GM12878 (cell line): ENCODE measurements at regions of chr14 and their contacts with region 1.

Region 1: DNA sequence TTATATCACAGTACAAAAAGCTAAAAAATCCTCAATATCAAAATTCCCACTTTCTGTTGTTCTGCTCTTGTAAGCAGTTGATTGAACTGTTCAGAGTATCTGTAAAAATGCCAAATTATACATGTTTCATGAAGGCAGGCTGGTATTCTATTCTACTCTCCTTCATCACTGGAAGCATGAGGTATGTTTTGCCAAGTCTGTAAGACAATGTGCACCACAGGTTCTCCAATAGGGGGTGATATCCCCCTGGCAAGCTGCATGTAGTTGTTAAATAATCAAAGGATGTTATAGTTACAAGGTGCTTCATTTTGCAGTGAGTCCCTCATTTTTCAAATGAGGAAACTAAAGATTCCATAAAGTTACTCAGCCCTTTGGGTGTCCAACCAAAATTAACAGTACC is 15.1 kb upstream of the NEK9 start:
- DNase-seq: no peak
- ATAC-seq: peak; percentile 65
- H3K4me3 ChIP-seq: no peak overlapping the region
- H3K27ac ChIP-seq: no peak overlapping the region
- H3K4me1 ChIP-seq: peaks cover 18% of the 10 kb centered on the region
- H3K27me3 ChIP-seq: no peaks in the 10 kb centered on the region
- CTCF ChIP-seq: peak; percentile 44 to 47 (median 45); a peak in 5 of 6 replicates
- EP300 ChIP-seq: no peak
- POLR2A ChIP-seq: no peak
- RAD21 ChIP-seq: peak; percentile 63

Region 2: DNA sequence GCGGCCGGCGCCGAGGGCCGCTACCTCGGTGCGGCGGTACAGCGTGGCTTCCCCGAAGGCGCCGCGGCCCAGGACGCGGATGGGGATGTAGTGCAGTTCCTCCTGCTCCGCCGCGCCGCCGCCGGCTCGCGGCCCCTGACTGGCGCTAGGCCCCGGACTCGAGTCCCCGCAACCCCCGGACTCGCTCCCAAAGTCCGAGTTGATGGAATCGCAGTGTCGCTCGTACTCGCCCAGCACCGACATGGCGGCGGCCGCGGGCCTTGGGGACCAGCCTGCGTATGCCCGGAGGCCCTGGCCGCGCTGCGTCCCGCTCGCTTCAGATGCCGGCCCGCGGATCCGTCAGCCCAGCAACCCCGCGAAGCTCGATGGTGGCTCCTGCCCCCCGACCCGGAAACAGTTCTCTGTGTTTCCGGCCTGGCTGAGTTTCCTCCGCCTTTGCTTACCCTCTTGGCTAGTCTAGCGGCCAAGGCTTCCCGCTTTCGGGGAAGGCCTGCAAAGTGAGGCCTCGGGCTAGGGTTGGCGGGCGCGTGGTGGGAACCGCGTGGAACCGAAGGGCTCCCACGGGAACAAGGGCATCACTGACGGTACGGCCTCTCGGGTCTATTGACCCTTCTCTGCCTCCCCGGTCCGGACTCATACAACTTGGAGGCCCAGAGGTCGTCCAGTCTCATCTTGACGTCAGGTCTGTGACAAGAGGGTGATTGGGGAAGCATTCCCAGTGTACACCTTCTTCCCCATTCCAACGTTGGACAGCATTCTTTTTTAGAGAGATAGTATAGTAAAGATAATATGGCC is 15.1 kb before region 1 on chr14 and contains the start of gene NEK9:
- CTCF ChIA-PET with region 1: interaction called, 7 read pairs
- POLR2A ChIA-PET with region 1: interaction called, 3 read pairs
- RAD21 ChIA-PET with region 1: interaction called, 11 read pairs
- SMC1A ChIA-PET with region 1: interaction called, 11 read pairs
- in situ Hi-C with region 1: no loop called
- intact Hi-C with region 1: no loop called
- DNase-seq: peak; percentile 45
- ATAC-seq: peak; percentile 98
- H3K4me3 ChIP-seq: peak within 1 kb of the TSS; percentile 76
- H3K27ac ChIP-seq: peak within 1 kb of the TSS; percentile 88
- H3K4me1 ChIP-seq: peaks cover 11% of the 10 kb centered on the region
- H3K27me3 ChIP-seq: no peaks in the 10 kb centered on the region
- CTCF ChIP-seq: no peak
- EP300 ChIP-seq: no peak
- POLR2A ChIP-seq: peak; percentile 98
- RAD21 ChIP-seq: no peak
- polyA plus RNA-seq, gene NEK9: 6.0 to 15.7 TPM

Region 3: GRCh38 chr14:75230140-75231045 is 88.4 kb after region 1 on chr14:
- CTCF ChIA-PET with region 1: interaction called, 4 read pairs
- POLR2A ChIA-PET with region 1: no interaction called
- RAD21 ChIA-PET with region 1: no interaction called
- SMC1A ChIA-PET with region 1: no interaction called
- in situ Hi-C with region 1: no loop called
- intact Hi-C with region 1: loop called (anchors 5 kb)
- DNase-seq: peak; percentile 74
- ATAC-seq: peak; percentile 81
- H3K4me3 ChIP-seq: no peak overlapping the region
- H3K27ac ChIP-seq: peak overlapping the region; percentile 34; the same call in 1 of the 2 replicates
- H3K4me1 ChIP-seq: peaks cover 37% of the 10 kb centered on the region
- H3K27me3 ChIP-seq: no peaks in the 10 kb centered on the region
- CTCF ChIP-seq: peak in 1 of 3 experiments; percentile 19; a peak in 1 of 6 replicates
- EP300 ChIP-seq: 0 out of 4 replicates have a peak, but pooled peaks of 1 of the 2 experiments have one; percentile 23
- POLR2A ChIP-seq: no peak
- RAD21 ChIP-seq: no peak

Region 4: GRCh38 chr14:75293920-75294642 is 152.1 kb after region 1 on chr14:
- CTCF ChIA-PET with region 1: interaction called, 227 read pairs
- POLR2A ChIA-PET with region 1: interaction called, 10 read pairs
- RAD21 ChIA-PET with region 1: interaction called, 57 read pairs
- SMC1A ChIA-PET with region 1: interaction called, 29 read pairs
- in situ Hi-C with region 1: no loop called
- intact Hi-C with region 1: no loop called
- DNase-seq: no peak
- ATAC-seq: peak; percentile 99
- H3K4me3 ChIP-seq: peak overlapping the region; percentile 72
- H3K27ac ChIP-seq: no peak overlapping the region
- H3K4me1 ChIP-seq: peaks cover 17% of the 10 kb centered on the region
- H3K27me3 ChIP-seq: no peaks in the 10 kb centered on the region; a peak in 1 of 4 replicates
- CTCF ChIP-seq: no peak
- EP300 ChIP-seq: peak in 1 of 2 experiments; percentile 72; a peak in 2 of 4 replicates
- POLR2A ChIP-seq: no peak
- RAD21 ChIP-seq: no peak

Region 5: DNA sequence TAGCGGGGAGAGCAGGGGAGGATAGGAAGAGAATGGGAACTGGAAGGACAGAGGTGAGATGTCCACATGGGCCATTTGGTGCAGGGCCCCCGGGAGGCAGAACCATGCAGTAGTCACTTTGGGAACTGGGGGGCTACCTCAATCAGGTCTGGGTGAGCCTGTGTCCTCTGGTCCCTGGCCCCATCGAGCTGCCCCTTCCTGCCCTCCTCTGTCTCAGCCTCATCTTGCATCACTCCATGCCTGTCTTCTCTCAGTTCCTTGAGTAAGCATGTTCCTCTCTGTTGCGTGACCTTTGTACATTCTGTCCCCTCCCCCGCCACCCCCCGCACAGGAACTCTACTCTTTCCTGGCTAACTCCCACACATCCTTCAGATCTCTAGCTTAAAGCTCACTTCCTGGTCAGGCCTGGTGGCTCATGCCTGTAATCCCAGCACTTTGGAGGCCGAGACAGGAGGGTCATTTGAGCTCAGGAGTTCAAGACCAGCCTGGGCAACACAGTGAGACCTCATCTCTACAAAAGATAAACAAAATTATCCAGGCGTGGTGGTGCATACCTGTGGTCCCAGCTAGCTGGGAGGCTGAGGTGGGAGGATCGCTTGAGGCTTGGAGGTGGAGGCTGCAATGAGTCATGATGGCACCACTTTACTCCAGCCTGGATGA is 159.8 kb after region 1 on chr14:
- CTCF ChIA-PET with region 1: interaction called, 227 read pairs
- POLR2A ChIA-PET with region 1: interaction called, 3 read pairs
- RAD21 ChIA-PET with region 1: interaction called, 57 read pairs
- SMC1A ChIA-PET with region 1: interaction called, 29 read pairs
- in situ Hi-C with region 1: no loop called
- intact Hi-C with region 1: no loop called
- DNase-seq: no peak
- ATAC-seq: peak; percentile 29; the same call in 1 of the 3 replicates
- H3K4me3 ChIP-seq: no peak overlapping the region
- H3K27ac ChIP-seq: no peak overlapping the region
- H3K4me1 ChIP-seq: no peaks in the 10 kb centered on the region
- H3K27me3 ChIP-seq: no peaks in the 10 kb centered on the region
- CTCF ChIP-seq: no peak
- EP300 ChIP-seq: no peak
- POLR2A ChIP-seq: no peak
- RAD21 ChIP-seq: no peak